ENCODE measurements at regions of chr1 and their contacts with region 1.

Region 1: GRCh38 chr1:226608699-226609505 is 60.3 kb downstream of the STUM start:
- DNase-seq: peak; percentile 20
- H3K4me3 ChIP-seq: no peak overlapping the region
- H3K27ac ChIP-seq: no peak overlapping the region
- H3K4me1 ChIP-seq: peaks cover 1% of the 10 kb centered on the region
- H3K27me3 ChIP-seq: no peaks in the 10 kb centered on the region
- CTCF ChIP-seq: peak; percentile 80 to 91

Region 2: DNA sequence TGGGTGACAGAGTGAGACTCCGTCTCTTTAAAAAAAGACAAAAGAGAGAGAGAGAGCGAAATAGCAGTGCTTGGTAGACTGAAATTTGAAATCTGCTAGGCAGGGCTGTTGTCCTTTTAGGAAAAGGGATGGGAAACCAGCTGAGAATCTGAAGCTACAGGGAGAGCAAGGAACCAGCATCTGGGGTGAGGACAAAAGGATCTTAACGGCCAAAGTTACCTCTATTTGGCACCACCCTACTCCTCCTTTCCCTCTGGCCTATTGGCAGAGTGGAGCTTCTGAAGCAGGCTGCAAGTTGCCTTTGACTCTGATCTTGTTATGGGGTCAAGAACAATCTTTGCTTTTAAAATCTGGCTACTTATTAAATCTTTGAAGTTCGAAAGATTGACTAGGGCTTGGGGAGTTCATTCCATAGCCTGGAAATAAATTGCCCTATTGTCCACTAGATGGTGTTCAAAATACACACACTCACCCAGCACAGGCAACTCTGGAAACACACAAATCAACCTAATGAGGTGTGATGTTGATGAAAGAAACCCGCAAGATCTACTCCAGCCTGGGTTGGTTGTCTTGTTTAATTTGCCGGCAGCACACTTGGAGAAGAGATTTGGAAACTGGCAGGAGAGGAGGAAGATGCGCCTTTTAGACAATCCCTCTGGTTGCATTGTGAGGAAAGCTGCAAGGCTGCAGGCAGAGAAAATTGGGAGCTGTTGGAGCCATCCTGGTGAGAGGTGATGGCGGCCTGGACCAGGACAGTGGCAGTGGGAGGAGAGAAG is 184.5 kb before region 1 on chr1:
- CTCF ChIA-PET with region 1: no interaction called
- dilution Hi-C with region 1: no loop called
- in situ Hi-C with region 1: no loop called
- intact Hi-C with region 1: loop called (anchors 1 kb)
- DNase-seq: peak; percentile 39
- H3K4me3 ChIP-seq: no peak overlapping the region
- H3K27ac ChIP-seq: no peak overlapping the region
- H3K4me1 ChIP-seq: no peaks in the 10 kb centered on the region
- H3K27me3 ChIP-seq: no peaks in the 10 kb centered on the region
- CTCF ChIP-seq: peak; percentile 42 to 67

Region 3: GRCh38 chr1:226541631-226542622 is 67.0 kb before region 1 on chr1:
- CTCF ChIA-PET with region 1: interaction called, 7 read pairs
- dilution Hi-C with region 1: loop called (anchors 5 kb)
- in situ Hi-C with region 1: no loop called
- intact Hi-C with region 1: loop called (anchors 1 kb)
- DNase-seq: no peak
- H3K4me3 ChIP-seq: no peak overlapping the region
- H3K27ac ChIP-seq: no peak overlapping the region
- H3K4me1 ChIP-seq: no peaks in the 10 kb centered on the region
- H3K27me3 ChIP-seq: no peaks in the 10 kb centered on the region
- CTCF ChIP-seq: no peak

Region 4: GRCh38 chr1:226547754-226548191 is 61.1 kb before region 1 on chr1:
- CTCF ChIA-PET with region 1: interaction called, 7 read pairs
- dilution Hi-C with region 1: loop called (anchors 5 kb)
- in situ Hi-C with region 1: no loop called
- intact Hi-C with region 1: loop called (anchors 1 kb)
- DNase-seq: peak; percentile 81
- H3K4me3 ChIP-seq: no peak overlapping the region
- H3K27ac ChIP-seq: no peak overlapping the region
- H3K4me1 ChIP-seq: peaks cover 21% of the 10 kb centered on the region
- H3K27me3 ChIP-seq: peaks cover 12% of the 10 kb centered on the region
- CTCF ChIP-seq: peak; percentile 98 to 99

Region 5: GRCh38 chr1:226626577-226626956 is 17.7 kb after region 1 on chr1:
- CTCF ChIA-PET with region 1: interaction called, 15 read pairs
- dilution Hi-C with region 1: no loop called
- in situ Hi-C with region 1: no loop called
- intact Hi-C with region 1: no loop called
- DNase-seq: peak; percentile 40
- H3K4me3 ChIP-seq: no peak overlapping the region
- H3K27ac ChIP-seq: no peak overlapping the region
- H3K4me1 ChIP-seq: peaks cover 7% of the 10 kb centered on the region
- H3K27me3 ChIP-seq: no peaks in the 10 kb centered on the region
- CTCF ChIP-seq: peak; percentile 83 to 92

Measured in mammary epithelial cell (primary cell).